ENCODE measurements at regions of chr9 and their contacts with region 1.

Region 1: GRCh38 chr9:69190086-69190862 is 16.2 kb downstream of the TJP2 start:
- DNase-seq: no peak
- H3K4me3 ChIP-seq: no peak overlapping the region
- H3K27ac ChIP-seq: peak overlapping the region in 1 of 3 donors; percentile 6
- H3K4me1 ChIP-seq: peaks cover 45 to 78% of the 10 kb centered on the region in 2 donors
- H3K27me3 ChIP-seq: no peaks in the 10 kb centered on the region
- CTCF ChIP-seq: no peak
- POLR2A ChIP-seq: no peak

Region 2: DNA sequence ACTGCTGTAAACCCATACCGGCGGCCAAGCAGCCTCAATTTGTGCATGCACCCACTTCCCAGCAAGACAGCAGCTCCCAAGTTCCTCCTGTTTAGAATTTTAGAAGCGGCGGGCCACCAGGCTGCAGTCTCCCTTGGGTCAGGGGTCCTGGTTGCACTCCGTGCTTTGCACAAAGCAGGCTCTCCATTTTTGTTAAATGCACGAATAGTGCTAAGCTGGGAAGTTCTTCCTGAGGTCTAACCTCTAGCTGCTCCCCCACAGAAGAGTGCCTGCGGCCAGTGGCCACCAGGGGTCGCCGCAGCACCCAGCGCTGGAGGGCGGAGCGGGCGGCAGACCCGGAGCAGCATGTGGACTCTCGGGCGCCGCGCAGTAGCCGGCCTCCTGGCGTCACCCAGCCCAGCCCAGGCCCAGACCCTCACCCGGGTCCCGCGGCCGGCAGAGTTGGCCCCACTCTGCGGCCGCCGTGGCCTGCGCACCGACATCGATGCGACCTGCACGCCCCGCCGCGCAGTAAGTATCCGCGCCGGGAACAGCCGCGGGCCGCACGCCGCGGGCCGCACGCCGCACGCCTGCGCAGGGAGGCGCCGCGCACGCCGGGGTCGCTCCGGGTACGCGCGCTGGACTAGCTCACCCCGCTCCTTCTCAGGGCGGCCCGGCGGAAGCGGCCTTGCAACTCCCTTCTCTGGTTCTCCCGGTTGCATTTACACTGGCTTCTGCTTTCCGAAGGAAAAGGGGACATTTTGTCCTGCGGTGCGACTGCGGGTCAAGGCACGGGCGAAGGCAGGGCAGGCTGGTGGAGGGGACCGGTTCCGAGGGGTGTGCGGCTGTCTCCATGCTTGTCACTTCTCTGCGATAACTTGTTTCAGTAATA is 154.6 kb before region 1 on chr9 and contains the start of gene FXN:
- intact Hi-C with region 1: loop called (anchors 5 kb)
- DNase-seq: peak; percentile 75 to 83
- H3K4me3 ChIP-seq: peak within 1 kb of the TSS; percentile 46 to 92 (median 48)
- H3K27ac ChIP-seq: peak within 1 kb of the TSS; percentile 60 to 80 (median 69)
- H3K4me1 ChIP-seq: peaks cover 0 to 5% of the 10 kb centered on the region in 2 donors
- H3K27me3 ChIP-seq: no peaks in the 10 kb centered on the region
- CTCF ChIP-seq: peak; percentile 84 to 99 (median 98)
- POLR2A ChIP-seq: peak in 1 of 2 donors; percentile 55
- total RNA-seq, gene FXN: 10.6 to 11.4 (median 11.1) TPM

Region 3: GRCh38 chr9:69054989-69055388 is 135.3 kb before region 1 on chr9:
- intact Hi-C with region 1: loop called (anchors 5 kb)
- DNase-seq: peak; percentile 85 to 87
- H3K4me3 ChIP-seq: no peak overlapping the region
- H3K27ac ChIP-seq: peak overlapping the region; percentile 62 to 85 (median 82)
- H3K4me1 ChIP-seq: peaks cover 18 to 19% of the 10 kb centered on the region in 2 donors
- H3K27me3 ChIP-seq: no peaks in the 10 kb centered on the region
- CTCF ChIP-seq: no peak
- POLR2A ChIP-seq: no peak